Endothelial cell of umbilical vein (primary cell): ENCODE measurements at regions of chr6 and their contacts with region 1.

Region 1: DNA sequence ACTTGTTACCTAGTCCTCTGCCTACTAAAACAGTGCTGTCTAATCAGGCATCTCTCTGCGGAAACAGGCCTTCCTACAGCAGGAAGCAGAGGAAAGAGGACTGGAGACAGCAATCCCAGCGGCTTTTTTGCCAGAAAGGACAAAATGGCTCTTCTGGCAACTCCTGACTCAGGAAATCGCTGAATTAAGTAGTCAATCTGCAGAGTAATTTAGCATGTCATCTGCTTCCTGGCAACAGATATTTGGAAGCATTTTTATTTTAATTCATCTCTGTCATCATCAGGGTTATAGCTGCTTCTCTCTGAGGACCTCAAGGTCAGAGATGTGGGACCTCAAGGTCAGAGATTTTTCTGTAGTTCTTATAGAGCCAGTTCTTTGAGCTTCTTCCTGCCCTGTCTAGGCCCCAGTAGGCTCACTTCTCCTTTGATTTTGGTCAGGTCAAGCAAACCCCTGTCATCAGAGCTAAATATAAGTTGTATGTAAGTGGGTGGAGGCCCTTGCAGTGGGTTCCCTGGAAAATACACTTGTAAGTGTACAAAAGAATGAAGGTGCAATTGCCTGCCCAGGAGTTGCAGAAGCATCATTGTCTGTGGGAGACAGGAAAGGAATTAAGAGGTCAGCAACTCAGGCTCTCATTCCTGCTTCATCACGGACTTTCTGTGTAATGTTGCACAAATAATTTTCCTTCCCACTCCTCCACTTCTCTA is 229.4 kb downstream of the ALDH8A1 start:
- DNase-seq: peak; percentile 94
- H3K4me3 ChIP-seq: no peak overlapping the region
- H3K27ac ChIP-seq: peak overlapping the region; percentile 74
- H3K4me1 ChIP-seq: peaks cover 37% of the 10 kb centered on the region
- H3K27me3 ChIP-seq: no peaks in the 10 kb centered on the region
- CTCF ChIP-seq: no peak
- POLR2A ChIP-seq: peak; percentile 61

Region 2: DNA sequence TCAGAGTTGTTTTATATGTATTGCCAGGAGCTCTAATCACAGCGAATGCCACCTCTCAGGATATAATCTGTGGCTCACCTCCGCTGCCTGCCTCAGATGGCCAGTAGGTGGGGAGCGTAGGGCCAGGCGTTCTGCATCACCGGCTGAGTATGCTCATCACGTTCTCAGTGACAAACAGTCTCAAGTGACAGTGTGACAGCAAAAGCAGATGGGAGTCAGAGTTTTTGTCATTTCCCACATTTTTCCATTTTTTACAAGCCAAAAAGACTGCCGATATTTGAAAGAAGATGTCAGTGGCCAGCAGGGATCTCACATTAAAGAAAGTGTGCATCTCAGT is 20.7 kb after region 1 on chr6:
- CTCF ChIA-PET with region 1: interaction called, 10 read pairs
- POLR2A ChIA-PET with region 1: no interaction called
- dilution Hi-C with region 1: no loop called
- intact Hi-C with region 1: loop called (anchors 2 kb)
- DNase-seq: no peak
- H3K4me3 ChIP-seq: no peak overlapping the region
- H3K27ac ChIP-seq: peak overlapping the region; percentile 68
- H3K4me1 ChIP-seq: peaks cover 27% of the 10 kb centered on the region
- H3K27me3 ChIP-seq: no peaks in the 10 kb centered on the region
- CTCF ChIP-seq: peak in 1 of 2 donors; percentile 17
- POLR2A ChIP-seq: no peak